Heart left ventricle (tissue), 16 donors: ENCODE measurements at regions of chr1 and their contacts with region 1.

Region 1: DNA sequence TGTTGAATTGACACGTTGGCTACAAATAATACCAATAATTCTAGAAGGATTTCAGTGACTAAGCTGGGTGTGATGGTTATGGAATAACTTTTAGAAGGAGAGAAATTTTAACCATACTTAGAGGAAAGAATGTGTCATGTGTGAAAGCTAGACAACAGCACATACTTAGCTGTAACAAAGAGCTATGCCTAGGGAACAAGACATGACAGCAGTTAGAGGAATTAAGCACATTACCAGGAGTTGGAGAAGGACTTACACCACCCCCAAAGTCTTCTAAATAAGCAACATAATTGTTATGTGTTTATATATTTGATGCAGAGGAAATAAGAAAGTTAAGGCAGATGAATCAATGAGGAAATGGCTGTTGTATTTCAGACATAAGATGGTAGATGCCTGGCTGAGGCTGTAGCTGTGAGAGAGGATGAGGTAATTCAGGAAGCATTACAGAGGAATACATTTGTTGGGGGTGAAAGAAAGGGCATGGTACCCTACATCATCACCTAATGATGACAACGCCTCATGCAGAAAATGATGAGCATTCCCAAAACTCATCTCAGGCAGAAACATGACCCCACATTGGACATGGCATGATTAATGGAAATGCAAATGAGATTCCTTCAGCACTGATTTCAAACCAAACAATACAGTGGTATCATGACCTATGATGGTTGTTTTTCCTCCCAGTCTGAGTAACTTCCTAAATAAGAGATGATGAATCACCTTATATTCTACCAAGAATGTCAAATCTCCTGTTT is 211.5 kb downstream of the LHX8 start:
- DNase-seq: no peak
- ATAC-seq: no peak
- H3K4me3 ChIP-seq: no peak overlapping the region
- H3K27ac ChIP-seq: no peak overlapping the region
- H3K4me1 ChIP-seq: no peaks in the 10 kb centered on the region
- H3K27me3 ChIP-seq: no peaks in the 10 kb centered on the region
- CTCF ChIP-seq: no peak
- POLR2A ChIP-seq: no peak

Region 2: DNA sequence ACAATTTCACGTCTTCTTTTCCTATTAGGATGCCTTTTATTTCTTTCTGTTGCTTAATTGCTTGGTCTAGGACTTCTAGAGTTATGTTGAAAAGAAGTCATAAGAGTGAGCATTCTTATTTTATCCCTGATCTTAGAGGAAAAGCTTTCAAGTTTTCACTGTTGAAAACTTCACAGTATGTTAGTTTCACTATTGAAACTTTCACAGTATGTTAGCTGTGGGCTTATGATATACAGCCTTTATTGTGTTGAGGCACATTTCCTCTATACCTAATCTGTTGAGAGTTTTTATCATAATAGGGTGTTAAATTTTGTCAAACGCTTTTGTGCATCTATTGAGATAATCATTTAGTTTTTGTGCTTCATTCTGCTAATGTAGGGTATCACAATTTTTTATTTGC is 15.5 kb after region 1 on chr1:
- intact Hi-C with region 1: loop called in 1 of 10 experiments (anchors 2 kb)
- DNase-seq: no peak
- ATAC-seq: no peak
- H3K4me3 ChIP-seq: no peak overlapping the region
- H3K27ac ChIP-seq: no peak overlapping the region
- H3K4me1 ChIP-seq: no peaks in the 10 kb centered on the region
- H3K27me3 ChIP-seq: no peaks in the 10 kb centered on the region
- CTCF ChIP-seq: no peak
- POLR2A ChIP-seq: no peak